ENCODE measurements at regions of chr12 and their contacts with region 1.

Region 1: GRCh38 chr12:15629108-15629507 is 160.1 kb downstream of the EPS8 start:
- DNase-seq: peak; percentile 84 to 91
- H3K4me3 ChIP-seq: no peak overlapping the region
- H3K27ac ChIP-seq: peak overlapping the region; percentile 79 to 83
- H3K4me1 ChIP-seq: peaks cover 0 to 96% (median 32%) of the 10 kb centered on the region in 4 donors
- H3K27me3 ChIP-seq: no peaks in the 10 kb centered on the region
- CTCF ChIP-seq: no peak

Region 2: DNA sequence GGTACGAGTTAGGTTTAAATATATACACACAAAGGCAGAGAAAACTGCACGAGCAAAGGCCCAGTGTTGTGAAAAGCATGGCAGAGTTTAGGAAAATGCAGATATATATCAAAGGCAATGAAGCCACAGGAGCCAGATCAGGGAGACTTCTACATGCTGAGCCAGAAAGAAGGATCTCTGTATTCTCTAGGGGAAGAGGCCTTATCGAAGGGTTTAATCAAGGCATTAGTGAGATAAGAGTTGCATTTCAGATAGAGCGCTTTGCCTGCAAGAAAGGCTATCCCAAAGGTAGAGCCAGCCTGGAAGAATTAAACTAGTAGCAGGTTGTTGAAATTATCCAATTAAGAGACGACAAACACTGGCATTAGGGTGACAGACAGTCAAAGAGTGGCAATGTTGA is 299.2 kb before region 1 on chr12:
- intact Hi-C with region 1: no loop called
- DNase-seq: no peak
- H3K4me3 ChIP-seq: no peak overlapping the region
- H3K27ac ChIP-seq: no peak overlapping the region
- H3K4me1 ChIP-seq: no peaks in the 10 kb centered on the region
- H3K27me3 ChIP-seq: peaks cover 0 to 12% of the 10 kb centered on the region in 2 donors
- CTCF ChIP-seq: no peak

Region 3: GRCh38 chr12:15789220-15790171 is 160.4 kb after region 1 on chr12 and contains the start of gene EPS8:
- intact Hi-C with region 1: loop called (anchors 10 kb)
- DNase-seq: peak; percentile 90 to 96
- H3K4me3 ChIP-seq: peak within 1 kb of the TSS; percentile 75 to 92
- H3K27ac ChIP-seq: peak within 1 kb of the TSS; percentile 87 to 89
- H3K4me1 ChIP-seq: peaks cover 0 to 23% (median 7%) of the 10 kb centered on the region in 4 donors
- H3K27me3 ChIP-seq: no peaks in the 10 kb centered on the region
- CTCF ChIP-seq: no peak